Panc1 (cell line): ENCODE measurements at regions of chr11 and their contacts with region 1.

Region 1: GRCh38 chr11:66694732-66695207 is 17.1 kb upstream of the RBM4B start:
- DNase-seq: peak; percentile 90
- ATAC-seq: peak; percentile 96
- H3K4me3 ChIP-seq: no peak overlapping the region
- H3K27ac ChIP-seq: no peak overlapping the region
- H3K4me1 ChIP-seq: no peaks in the 10 kb centered on the region
- H3K27me3 ChIP-seq: no peaks in the 10 kb centered on the region
- CTCF ChIP-seq: peak; percentile 100

Region 2: DNA sequence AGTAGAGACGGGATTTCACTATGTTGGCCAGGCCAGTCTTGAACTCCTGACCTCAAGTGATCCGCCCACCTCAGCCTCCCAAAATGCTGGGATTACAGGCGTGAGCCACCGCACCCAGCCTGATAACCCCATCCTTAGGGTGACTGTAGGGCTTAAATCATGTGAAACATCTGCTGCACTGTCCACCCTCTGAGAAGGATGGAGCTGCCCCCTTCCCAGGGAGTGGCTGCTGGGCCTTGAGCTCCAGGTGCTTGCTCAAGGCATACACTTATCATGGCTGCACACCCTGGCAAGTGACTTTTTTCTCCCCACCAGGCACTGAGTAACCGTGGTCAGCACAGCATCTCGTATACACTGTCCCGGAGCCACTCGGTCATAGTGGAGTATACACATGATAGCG is 222.7 kb before region 1 on chr11:
- CTCF ChIA-PET with region 1: no interaction called
- POLR2A ChIA-PET with region 1: no interaction called
- in situ Hi-C with region 1: no loop called
- intact Hi-C with region 1: no loop called
- DNase-seq: no peak
- ATAC-seq: no peak
- H3K4me3 ChIP-seq: no peak overlapping the region
- H3K27ac ChIP-seq: no peak overlapping the region
- H3K4me1 ChIP-seq: peaks cover 8% of the 10 kb centered on the region
- H3K27me3 ChIP-seq: no peaks in the 10 kb centered on the region
- CTCF ChIP-seq: no peak

Region 3: DNA sequence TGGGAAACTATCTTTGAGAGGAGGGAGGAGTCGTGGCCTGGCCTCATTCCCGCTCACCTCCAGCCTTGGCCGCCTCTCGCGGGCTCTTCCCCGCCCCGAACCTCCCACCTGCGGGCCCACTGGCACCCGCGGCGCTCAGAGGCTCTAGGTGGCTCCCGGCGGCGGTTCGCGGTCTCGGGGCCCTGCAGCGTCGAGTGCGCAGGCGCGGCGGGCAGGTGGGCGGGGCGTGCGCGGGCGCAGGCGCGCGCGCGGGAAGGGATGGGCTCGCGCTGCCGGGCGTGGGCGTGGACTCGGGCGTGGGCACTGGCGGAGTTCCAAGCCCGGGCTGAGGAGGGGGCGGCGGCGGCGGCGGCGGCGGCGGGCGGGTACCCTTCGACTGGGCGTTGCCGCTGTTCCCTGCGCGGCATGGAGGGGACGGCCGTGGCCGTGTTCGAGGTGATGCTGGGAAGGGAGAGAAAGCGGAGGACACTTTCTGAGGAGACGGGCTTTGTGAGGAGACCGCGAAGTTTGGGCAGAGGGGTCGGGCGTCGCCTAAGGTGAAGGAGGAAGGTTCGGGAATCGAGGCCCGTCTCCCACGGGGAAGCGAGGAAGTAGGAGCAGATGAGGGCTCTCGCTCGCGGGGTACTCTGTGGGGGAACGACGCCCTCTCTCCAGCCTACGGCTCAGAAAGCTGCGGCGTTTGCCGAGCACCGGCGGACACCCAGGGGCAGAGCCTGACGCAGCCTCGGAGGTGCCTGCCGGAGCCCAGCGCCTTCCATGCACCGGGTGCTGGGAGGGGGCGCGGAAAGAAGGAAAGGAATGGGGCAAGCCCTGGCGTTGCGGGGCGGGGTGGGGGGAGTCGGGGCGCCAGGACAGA is 49.9 kb after region 1 on chr11:
- CTCF ChIA-PET with region 1: no interaction called
- POLR2A ChIA-PET with region 1: no interaction called
- in situ Hi-C with region 1: no loop called
- intact Hi-C with region 1: loop called (anchors 10 kb)
- DNase-seq: no peak
- ATAC-seq: peak; percentile 89
- H3K4me3 ChIP-seq: peak overlapping the region; percentile 85 to 87
- H3K27ac ChIP-seq: peak overlapping the region; percentile 90
- H3K4me1 ChIP-seq: peaks cover 4% of the 10 kb centered on the region
- H3K27me3 ChIP-seq: no peaks in the 10 kb centered on the region
- CTCF ChIP-seq: no peak

Region 4: GRCh38 chr11:66787912-66788758 is 93.4 kb after region 1 on chr11:
- CTCF ChIA-PET with region 1: no interaction called
- POLR2A ChIA-PET with region 1: interaction called, 15 read pairs
- in situ Hi-C with region 1: no loop called
- intact Hi-C with region 1: no loop called
- DNase-seq: no peak
- ATAC-seq: no peak
- H3K4me3 ChIP-seq: no peak overlapping the region
- H3K27ac ChIP-seq: peak overlapping the region; percentile 32; the same call in 1 of the 2 replicates
- H3K4me1 ChIP-seq: peaks cover 18% of the 10 kb centered on the region
- H3K27me3 ChIP-seq: no peaks in the 10 kb centered on the region
- CTCF ChIP-seq: no peak

Region 5: GRCh38 chr11:66835768-66836405 is 141.1 kb after region 1 on chr11:
- CTCF ChIA-PET with region 1: interaction called, 5 read pairs
- POLR2A ChIA-PET with region 1: no interaction called
- in situ Hi-C with region 1: no loop called
- intact Hi-C with region 1: loop called (anchors 1 kb)
- DNase-seq: no peak
- ATAC-seq: no peak
- H3K4me3 ChIP-seq: no peak overlapping the region
- H3K27ac ChIP-seq: no peak overlapping the region
- H3K4me1 ChIP-seq: 0 out of 2 replicates have a peak, but pooled peaks cover 4% of the 10 kb centered on the region
- H3K27me3 ChIP-seq: no peaks in the 10 kb centered on the region
- CTCF ChIP-seq: no peak